Tibial artery (tissue), 4 donors: ENCODE measurements at regions of chr1 and their contacts with region 1.

Region 1: DNA sequence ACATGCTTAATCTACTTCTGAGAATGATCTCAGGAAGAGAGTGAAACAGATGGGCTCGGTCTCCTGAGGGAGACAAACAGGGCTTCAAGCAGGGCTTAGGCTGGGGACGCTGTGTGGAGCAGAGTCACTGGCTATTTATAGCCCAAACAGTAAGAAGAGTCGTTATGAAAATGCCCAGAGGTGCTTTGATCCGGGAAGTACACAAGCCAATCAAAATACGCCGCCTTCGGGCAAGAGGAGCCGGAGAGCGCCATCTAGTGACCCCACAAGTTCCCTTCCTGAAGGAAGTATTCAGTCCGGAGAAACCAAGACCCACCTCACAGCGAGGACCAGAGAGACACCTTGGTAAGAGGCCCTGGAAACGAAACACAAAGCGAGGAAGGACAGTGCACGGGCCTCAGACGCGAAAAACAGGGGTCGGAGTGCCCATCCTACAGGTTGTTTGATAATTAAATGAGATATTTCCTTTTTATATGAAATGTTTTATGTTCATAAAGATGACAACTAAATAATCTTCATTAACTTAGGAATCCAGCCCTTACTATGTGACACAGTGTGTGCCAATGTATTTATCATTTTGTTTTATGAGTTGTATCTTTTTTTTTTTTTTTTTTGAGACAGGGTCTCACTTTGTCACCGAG is 25.0 kb upstream of the SCCPDH start:
- DNase-seq: peak; percentile 79 to 86
- H3K4me3 ChIP-seq: peak overlapping the region; percentile 18 to 28
- H3K27ac ChIP-seq: no peak overlapping the region
- H3K4me1 ChIP-seq: peaks cover 0 to 11% (median 2%) of the 10 kb centered on the region in 4 donors
- H3K27me3 ChIP-seq: no peaks in the 10 kb centered on the region
- CTCF ChIP-seq: peak; percentile 78 to 81

Region 2: DNA sequence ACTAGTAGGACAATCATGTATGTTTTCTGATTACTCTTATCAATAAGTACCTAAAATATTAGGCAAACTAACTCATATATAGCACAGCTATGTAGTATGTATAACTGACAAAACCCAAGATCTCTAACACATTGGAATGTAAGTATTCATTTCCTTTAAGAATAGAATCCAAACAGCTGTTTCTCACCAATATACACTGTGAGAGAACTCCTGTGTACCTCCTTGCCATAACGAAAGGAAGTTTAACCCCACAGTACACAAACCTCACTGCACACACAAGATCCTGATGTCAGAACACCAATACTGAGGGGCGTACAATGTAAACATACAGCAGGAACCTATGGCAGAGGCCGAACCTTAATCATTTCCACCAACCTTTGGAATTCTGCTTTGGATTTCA is 305.1 kb before region 1 on chr1:
- intact Hi-C with region 1: no loop called
- DNase-seq: no peak
- H3K4me3 ChIP-seq: no peak overlapping the region
- H3K27ac ChIP-seq: no peak overlapping the region
- H3K4me1 ChIP-seq: no peaks in the 10 kb centered on the region
- H3K27me3 ChIP-seq: no peaks in the 10 kb centered on the region
- CTCF ChIP-seq: no peak

Region 3: DNA sequence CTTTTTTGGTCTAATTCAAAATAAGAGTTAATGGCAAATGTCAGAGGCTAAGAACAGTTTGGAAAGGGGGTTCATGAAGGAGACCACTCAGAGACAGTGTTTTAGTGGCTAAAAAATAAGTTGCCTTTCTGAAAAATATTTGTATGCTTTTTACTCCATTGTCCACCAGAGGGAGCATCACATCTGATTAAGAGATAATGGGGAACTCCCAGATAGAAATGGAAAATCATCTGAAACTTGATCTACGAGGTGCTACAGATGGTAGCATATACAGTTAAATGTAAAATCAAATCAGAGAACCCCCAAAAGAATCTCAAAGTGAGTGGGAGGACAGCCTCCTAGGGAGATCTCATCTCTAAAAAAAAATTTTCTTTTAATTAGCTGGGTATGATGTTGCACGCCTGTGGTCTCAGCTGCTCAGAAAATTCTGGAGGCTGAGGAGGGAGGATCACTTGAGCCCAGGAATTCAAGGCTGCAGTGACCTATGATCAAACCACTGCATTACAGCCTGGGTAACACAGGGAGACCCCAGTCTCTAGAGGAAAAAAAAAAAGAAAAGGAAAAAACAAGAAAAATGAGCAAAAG is 201.8 kb before region 1 on chr1:
- intact Hi-C with region 1: loop called (anchors 5 kb)
- DNase-seq: no peak
- H3K4me3 ChIP-seq: no peak overlapping the region
- H3K27ac ChIP-seq: no peak overlapping the region
- H3K4me1 ChIP-seq: no peaks in the 10 kb centered on the region
- H3K27me3 ChIP-seq: no peaks in the 10 kb centered on the region
- CTCF ChIP-seq: peak; percentile 62 to 77

Region 4: DNA sequence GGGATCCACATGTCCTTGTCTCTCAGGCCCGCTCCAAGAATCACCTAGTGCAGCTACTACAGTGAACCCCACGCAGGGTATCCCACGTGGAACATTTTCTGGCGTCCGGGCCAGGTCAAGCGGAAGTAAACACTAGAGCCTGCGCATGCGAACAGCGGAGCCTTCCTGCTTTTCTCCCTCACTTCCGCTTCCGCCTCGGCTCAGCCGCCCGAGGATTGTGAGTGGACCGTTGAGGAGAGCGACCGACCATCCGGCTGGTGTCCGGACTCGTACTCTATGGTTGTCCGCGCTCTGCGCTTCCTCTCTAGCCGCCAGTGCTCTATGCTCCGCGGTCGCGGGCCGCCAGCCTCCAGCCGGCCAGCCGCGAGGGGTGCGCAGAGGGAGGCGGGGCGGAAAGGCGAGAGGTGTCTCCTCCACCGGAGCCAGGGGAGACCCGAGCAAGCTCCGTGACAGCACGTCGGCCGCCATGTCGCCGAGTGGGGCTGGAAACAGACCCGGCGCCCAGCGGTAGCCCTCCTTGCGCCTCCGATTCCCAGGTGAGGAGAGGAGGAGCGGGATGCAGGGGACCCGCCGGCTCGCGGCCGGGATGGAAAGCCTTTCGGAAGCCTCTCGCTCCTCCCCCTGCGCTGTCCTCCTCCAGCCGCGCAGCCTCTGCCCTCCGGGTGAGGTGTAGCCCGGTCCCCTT is 132.9 kb before region 1 on chr1 and contains the starts of genes CNST and TFB2M:
- intact Hi-C with region 1: loop called (anchors 2 kb)
- DNase-seq: peak; percentile 98 to 99
- H3K4me3 ChIP-seq: peak within 1 kb of the TSS; percentile 91 to 94
- H3K27ac ChIP-seq: peak within 1 kb of the TSS; percentile 94 to 96
- H3K4me1 ChIP-seq: peaks cover 0 to 50% (median 31%) of the 10 kb centered on the region in 4 donors
- H3K27me3 ChIP-seq: no peaks in the 10 kb centered on the region
- CTCF ChIP-seq: peak in 1 of 2 experiments; percentile 15

Region 5: GRCh38 chr1:246641394-246641793 is 57.8 kb before region 1 on chr1:
- intact Hi-C with region 1: loop called (anchors 5 kb)
- DNase-seq: no peak
- H3K4me3 ChIP-seq: no peak overlapping the region
- H3K27ac ChIP-seq: peak overlapping the region; percentile 36 to 57
- H3K4me1 ChIP-seq: peaks cover 0 to 41% (median 12%) of the 10 kb centered on the region in 4 donors
- H3K27me3 ChIP-seq: no peaks in the 10 kb centered on the region
- CTCF ChIP-seq: no peak